Mammary epithelial cell (primary cell): ENCODE measurements at regions of chr15 and their contacts with region 1.

Region 1: GRCh38 chr15:70121624-70122297 is 24.0 kb upstream of the TLE3 start:
- DNase-seq: peak; percentile 63
- H3K4me3 ChIP-seq: no peak overlapping the region
- H3K27ac ChIP-seq: no peak overlapping the region
- H3K4me1 ChIP-seq: no peaks in the 10 kb centered on the region
- H3K27me3 ChIP-seq: no peaks in the 10 kb centered on the region
- CTCF ChIP-seq: peak in 1 of 2 donors; percentile 43

Region 2: DNA sequence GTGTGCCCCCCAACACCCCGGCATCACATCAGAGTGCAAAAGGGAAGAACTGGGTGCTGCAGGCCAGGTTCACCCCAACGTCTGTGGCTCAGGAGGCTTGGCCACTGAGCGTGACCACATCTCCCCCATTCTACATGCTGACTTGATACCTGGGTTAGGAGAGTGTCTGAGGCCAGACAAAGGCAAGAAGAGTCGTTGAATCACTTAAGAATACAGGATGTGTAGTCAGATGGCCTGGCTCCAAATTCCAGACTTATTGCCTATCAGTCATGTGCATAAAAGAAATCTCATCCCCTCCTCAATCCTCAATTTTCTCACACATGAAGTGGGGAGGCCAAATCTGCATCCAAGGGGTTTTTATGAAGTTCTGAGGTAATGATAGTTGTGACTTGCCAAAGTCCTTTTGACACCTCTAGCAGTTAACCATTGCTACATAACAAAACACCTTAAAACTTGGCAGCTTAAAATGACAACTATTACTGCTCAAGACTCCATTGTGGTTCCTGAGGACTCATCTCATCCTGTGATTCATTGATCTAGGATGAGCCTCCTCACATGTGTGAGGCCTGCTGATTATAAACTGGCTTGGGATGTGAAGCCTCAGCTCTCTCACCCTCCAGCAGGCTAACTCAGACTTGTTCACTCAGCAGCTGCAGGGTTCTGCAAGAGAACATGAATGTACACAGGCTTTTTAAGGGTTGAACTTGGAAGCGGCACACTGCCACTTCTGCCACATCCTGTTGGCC is 114.8 kb after region 1 on chr15:
- CTCF ChIA-PET with region 1: no interaction called
- dilution Hi-C with region 1: no loop called
- in situ Hi-C with region 1: no loop called
- intact Hi-C with region 1: loop called (anchors 5 kb)
- DNase-seq: peak; percentile 92
- H3K4me3 ChIP-seq: no peak overlapping the region
- H3K27ac ChIP-seq: peak overlapping the region; percentile 53
- H3K4me1 ChIP-seq: peaks cover 27% of the 10 kb centered on the region
- H3K27me3 ChIP-seq: no peaks in the 10 kb centered on the region
- CTCF ChIP-seq: no peak

Region 3: GRCh38 chr15:70259028-70259424 is 137.3 kb after region 1 on chr15:
- CTCF ChIA-PET with region 1: no interaction called
- dilution Hi-C with region 1: no loop called
- in situ Hi-C with region 1: no loop called
- intact Hi-C with region 1: no loop called
- DNase-seq: no peak
- H3K4me3 ChIP-seq: no peak overlapping the region
- H3K27ac ChIP-seq: no peak overlapping the region
- H3K4me1 ChIP-seq: peaks cover 6% of the 10 kb centered on the region
- H3K27me3 ChIP-seq: peaks cover 4% of the 10 kb centered on the region
- CTCF ChIP-seq: no peak

Region 4: DNA sequence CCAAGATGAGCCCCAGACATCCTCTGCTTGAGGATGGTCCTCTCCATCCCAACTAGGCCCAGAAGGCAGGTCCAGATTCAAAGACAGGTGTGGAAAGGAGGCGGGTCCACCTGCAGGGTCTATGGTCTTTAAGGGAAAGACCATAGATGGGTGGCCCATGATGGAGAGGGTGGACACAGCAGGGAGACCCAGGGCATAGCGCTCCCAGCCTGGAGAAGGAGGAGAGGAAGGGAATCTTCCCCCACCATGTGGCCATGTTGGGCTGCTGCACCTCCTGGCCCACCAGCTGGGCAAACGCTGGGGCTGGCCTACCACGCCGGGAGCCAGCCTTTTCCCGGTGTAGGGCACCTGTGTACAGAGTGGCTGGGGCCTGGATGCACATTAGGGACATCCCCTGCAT is 241.1 kb after region 1 on chr15:
- CTCF ChIA-PET with region 1: no interaction called
- dilution Hi-C with region 1: no loop called
- in situ Hi-C with region 1: no loop called
- intact Hi-C with region 1: loop called (anchors 5 kb)
- DNase-seq: no peak
- H3K4me3 ChIP-seq: no peak overlapping the region
- H3K27ac ChIP-seq: no peak overlapping the region
- H3K4me1 ChIP-seq: no peaks in the 10 kb centered on the region
- H3K27me3 ChIP-seq: no peaks in the 10 kb centered on the region
- CTCF ChIP-seq: peak; percentile 31 to 58